ENCODE measurements at regions of chr12 and their contacts with region 1.

Region 1: GRCh38 chr12:117367011-117367638 is 5.7 kb upstream of the NOS1 start:
- DNase-seq: peak; percentile 38 to 95 (median 87)

Region 2: DNA sequence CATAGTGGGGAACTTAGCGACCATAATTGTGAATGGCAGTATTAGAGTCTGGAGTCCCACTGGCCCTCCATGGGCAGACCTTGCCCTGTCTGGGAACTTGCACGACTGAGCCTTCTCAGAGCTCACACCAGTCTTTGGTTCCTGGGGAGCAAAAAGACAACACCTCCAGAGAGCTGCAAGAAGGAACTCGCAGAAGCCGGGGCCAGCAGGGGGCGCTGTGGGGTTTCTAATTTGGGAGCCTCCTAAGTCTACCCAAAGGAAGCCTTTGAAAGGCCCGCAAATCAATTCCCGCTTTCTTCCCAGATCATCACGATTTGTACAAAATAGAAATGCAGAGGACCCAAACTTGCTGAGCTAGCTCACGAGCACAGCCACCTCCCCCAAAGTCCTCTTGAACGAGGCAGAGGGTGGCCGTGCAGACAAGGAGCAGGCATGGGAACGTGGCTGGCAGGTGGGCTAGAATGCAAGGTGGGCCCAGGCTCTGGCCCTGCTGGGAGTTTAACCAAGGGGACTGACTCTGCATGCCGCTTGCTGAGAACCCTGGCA is 130.6 kb before region 1 on chr12:
- intact Hi-C with region 1: loop called (anchors 10 kb)
- DNase-seq: peak; percentile 73 to 99 (median 96)

Measured in posterior cingulate gyrus (tissue), 11 donors.